Activated CD8-positive, alpha-beta T cell treated with anti-CD3 and anti-CD28 coated beads for 36 hours (primary cell): ENCODE measurements at regions of chr4 and their contacts with region 1.

Region 1: GRCh38 chr4:89024051-89024675 is 32.8 kb downstream of the FAM13A start:
- DNase-seq: peak; percentile 63
- ATAC-seq: peak; percentile 96
- H3K4me3 Mint-ChIP-seq: no peak overlapping the region
- H3K27ac Mint-ChIP-seq: no peak overlapping the region
- H3K4me1 Mint-ChIP-seq: no peaks in the 10 kb centered on the region
- H3K27me3 Mint-ChIP-seq: peaks cover 2% of the 10 kb centered on the region
- CTCF ChIP-seq: peak; percentile 65

Region 2: GRCh38 chr4:88523325-88524129 is 500.6 kb before region 1 on chr4 and contains the start of gene PYURF:
- CTCF ChIA-PET with region 1: interaction called, 27 read pairs
- POLR2A ChIA-PET with region 1: no interaction called
- intact Hi-C with region 1: loop called (anchors 5 kb)
- DNase-seq: peak; percentile 84
- ATAC-seq: peak; percentile 81
- H3K4me3 Mint-ChIP-seq: peak within 1 kb of the TSS; percentile 90
- H3K27ac Mint-ChIP-seq: peak within 1 kb of the TSS; percentile 89
- H3K4me1 Mint-ChIP-seq: peaks cover 35% of the 10 kb centered on the region
- H3K27me3 Mint-ChIP-seq: no peaks in the 10 kb centered on the region
- CTCF ChIP-seq: no peak
- total RNA-seq, gene PYURF: 47.4 to 50.7 TPM

Region 3: DNA sequence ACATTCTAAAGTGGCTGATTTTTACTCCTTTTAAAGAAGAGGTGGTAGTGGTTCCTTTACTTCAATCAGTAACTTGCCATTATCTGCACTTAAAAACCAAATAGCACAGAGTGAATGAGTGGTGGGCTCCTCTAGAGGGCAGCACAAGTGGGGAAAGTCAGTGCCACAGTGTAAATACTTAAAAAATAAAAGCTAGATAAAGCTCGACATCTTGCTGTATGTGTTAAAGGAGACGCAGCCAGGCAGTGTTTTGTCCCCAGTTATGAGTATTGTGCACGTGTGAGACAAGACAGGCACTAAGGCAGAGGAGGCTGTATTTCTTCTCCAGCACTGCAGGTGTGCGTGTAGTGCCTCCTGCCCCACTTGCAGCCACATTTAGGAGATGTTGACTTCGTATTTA is 351.2 kb before region 1 on chr4:
- CTCF ChIA-PET with region 1: interaction called, 6 read pairs
- POLR2A ChIA-PET with region 1: no interaction called
- intact Hi-C with region 1: loop called (anchors 10 kb)
- DNase-seq: peak; percentile 48
- ATAC-seq: peak; percentile 62
- H3K4me3 Mint-ChIP-seq: no peak overlapping the region
- H3K27ac Mint-ChIP-seq: no peak overlapping the region
- H3K4me1 Mint-ChIP-seq: peaks cover 7% of the 10 kb centered on the region
- H3K27me3 Mint-ChIP-seq: no peaks in the 10 kb centered on the region
- CTCF ChIP-seq: peak; percentile 57

Region 4: GRCh38 chr4:88818631-88819470 is 205.3 kb before region 1 on chr4:
- CTCF ChIA-PET with region 1: interaction called, 149 read pairs
- POLR2A ChIA-PET with region 1: no interaction called
- intact Hi-C with region 1: loop called (anchors 2 kb)
- DNase-seq: peak; percentile 60
- ATAC-seq: no peak
- H3K4me3 Mint-ChIP-seq: no peak overlapping the region
- H3K27ac Mint-ChIP-seq: no peak overlapping the region
- H3K4me1 Mint-ChIP-seq: peaks cover 27% of the 10 kb centered on the region
- H3K27me3 Mint-ChIP-seq: no peaks in the 10 kb centered on the region
- CTCF ChIP-seq: peak; percentile 73

Region 5: DNA sequence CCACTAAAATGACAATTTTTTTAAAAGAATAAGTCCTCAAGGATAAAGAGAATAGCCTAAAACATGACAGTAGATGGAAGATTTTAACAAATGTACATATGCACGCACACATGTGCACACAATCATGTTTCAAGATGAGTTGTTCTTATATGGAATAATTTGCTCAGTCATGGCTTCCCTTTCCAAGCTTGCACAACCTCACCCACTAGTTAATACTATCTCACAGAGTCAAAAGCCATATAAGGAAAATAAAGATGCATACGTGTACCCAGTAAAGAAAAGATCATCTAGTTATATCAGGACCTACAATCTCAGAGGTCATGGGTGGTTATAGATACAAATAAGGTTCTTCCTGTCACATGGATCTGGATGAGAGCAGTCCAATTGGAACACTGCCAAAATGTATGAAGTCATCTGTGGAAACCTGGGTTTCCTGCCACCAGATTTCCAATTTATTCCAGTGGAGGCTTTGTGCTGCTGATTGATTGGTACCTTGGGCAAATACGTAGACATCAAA is 23.3 kb before region 1 on chr4:
- CTCF ChIA-PET with region 1: interaction called, 11 read pairs
- POLR2A ChIA-PET with region 1: no interaction called
- intact Hi-C with region 1: no loop called
- DNase-seq: no peak
- ATAC-seq: no peak
- H3K4me3 Mint-ChIP-seq: no peak overlapping the region
- H3K27ac Mint-ChIP-seq: no peak overlapping the region
- H3K4me1 Mint-ChIP-seq: no peaks in the 10 kb centered on the region
- H3K27me3 Mint-ChIP-seq: peaks cover 2% of the 10 kb centered on the region
- CTCF ChIP-seq: no peak

Region 6: GRCh38 chr4:89101256-89102161 is 77.3 kb after region 1 on chr4:
- CTCF ChIA-PET with region 1: no interaction called
- POLR2A ChIA-PET with region 1: no interaction called
- intact Hi-C with region 1: no loop called
- DNase-seq: no peak
- ATAC-seq: peak; percentile 78
- H3K4me3 Mint-ChIP-seq: no peak overlapping the region
- H3K27ac Mint-ChIP-seq: peak overlapping the region; percentile 62
- H3K4me1 Mint-ChIP-seq: peaks cover 24% of the 10 kb centered on the region
- H3K27me3 Mint-ChIP-seq: no peaks in the 10 kb centered on the region
- CTCF ChIP-seq: no peak